ENCODE measurements at regions of chr6 and their contacts with region 1.

Region 1: GRCh38 chr6:4606821-4607704 is 169.1 kb upstream of the CDYL start:
- DNase-seq: peak; percentile 31 to 57
- ATAC-seq: peak in 3 of 4 donors; percentile 28 to 33 (median 32)
- H3K4me3 ChIP-seq: peak overlapping the region; percentile 30
- H3K27ac ChIP-seq: peak overlapping the region; percentile 77
- H3K4me1 ChIP-seq: peaks cover 30% of the 10 kb centered on the region
- H3K27me3 ChIP-seq: no peaks in the 10 kb centered on the region
- CTCF ChIP-seq: no peak

Region 2: DNA sequence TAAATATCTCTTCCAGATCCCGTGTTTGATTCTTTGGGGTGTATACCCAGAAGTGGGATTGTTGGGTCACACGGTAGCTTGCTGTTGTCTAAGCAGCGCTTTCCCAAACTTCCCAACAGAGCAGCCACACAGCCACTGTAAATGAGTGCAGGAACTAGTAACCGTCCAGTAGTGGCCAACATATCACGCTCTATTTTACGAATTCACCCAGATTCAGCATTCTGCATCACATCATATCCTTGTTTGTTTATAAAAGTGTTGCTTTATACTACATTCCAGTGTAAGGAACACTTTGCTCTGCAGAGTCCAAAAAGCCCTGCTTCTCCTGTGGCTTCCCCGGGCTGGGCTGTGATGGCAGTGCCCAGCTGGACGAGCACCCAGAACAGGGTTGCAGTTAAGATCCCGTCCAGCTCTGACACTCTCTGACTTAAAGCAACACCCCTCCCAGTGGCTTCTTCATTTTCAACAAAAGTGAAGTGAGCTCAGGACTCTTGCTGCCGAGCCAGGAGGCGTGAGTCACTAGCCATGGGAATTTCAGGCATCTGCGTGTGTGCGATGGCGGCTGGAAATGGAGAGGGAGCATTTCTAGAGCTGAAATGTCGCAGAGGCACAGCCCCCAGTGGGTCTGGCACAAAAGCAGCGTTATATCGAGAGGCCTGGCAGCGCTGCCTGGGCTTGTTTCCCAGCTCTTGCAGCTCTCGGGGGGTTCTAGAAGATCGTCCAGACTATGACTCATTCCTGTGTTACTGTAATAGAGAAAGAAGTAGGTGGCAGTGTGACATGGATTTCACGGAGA is 255.3 kb before region 1 on chr6:
- intact Hi-C with region 1: loop called in 1 of 2 experiments (anchors 5 kb)
- DNase-seq: peak; percentile 86 to 91
- ATAC-seq: peak; percentile 87 to 96 (median 92)
- H3K4me3 ChIP-seq: peak overlapping the region; percentile 56
- H3K27ac ChIP-seq: peak overlapping the region; percentile 91
- H3K4me1 ChIP-seq: peaks cover 8% of the 10 kb centered on the region
- H3K27me3 ChIP-seq: no peaks in the 10 kb centered on the region
- CTCF ChIP-seq: no peak

Region 3: DNA sequence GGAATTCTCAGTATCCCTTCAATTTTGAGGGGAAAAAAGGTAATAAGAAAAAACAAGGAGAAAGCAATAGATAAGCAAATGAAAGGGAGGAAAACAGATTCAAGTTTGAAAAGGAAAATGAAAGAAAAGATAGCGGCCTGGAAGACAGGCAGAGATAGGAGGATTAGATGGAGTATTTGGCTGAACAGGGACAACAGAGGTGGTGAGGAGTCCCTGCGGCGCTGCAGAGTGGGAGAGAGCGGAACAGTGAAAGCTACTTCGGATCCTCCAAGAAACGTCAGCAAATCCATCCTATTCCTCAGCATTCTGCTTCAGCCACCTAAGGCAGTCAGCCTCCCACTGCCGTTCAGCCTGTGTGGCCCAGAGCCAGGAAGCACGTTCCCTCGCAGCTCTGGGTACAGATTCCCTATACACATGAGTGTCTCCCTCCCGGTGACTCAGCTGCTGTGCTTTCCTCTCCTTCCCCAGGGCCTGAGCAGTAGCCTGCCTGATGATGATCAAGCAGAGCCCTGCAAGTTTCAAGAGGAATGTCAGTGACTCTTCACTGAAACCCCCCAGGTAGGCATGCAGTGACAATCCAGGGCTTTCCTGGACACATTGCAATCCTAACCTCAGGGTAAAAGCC is 125.7 kb after region 1 on chr6:
- intact Hi-C with region 1: no loop called
- DNase-seq: peak; percentile 56 to 63
- ATAC-seq: peak in 3 of 4 donors; percentile 63 to 76 (median 74)
- H3K4me3 ChIP-seq: no peak overlapping the region
- H3K27ac ChIP-seq: no peak overlapping the region
- H3K4me1 ChIP-seq: no peaks in the 10 kb centered on the region
- H3K27me3 ChIP-seq: no peaks in the 10 kb centered on the region
- CTCF ChIP-seq: no peak